Naive thymus-derived CD4-positive, alpha-beta T cell (primary cell): ENCODE measurements at regions of chr12 and their contacts with region 1.

Region 1: GRCh38 chr12:109995686-109996482 is at the start of gene GIT2:
- DNase-seq: peak; percentile 88 to 95 (median 93)
- ATAC-seq: peak; percentile 81
- H3K4me3 ChIP-seq: peak within 1 kb of the TSS; percentile 86
- H3K4me3 Mint-ChIP-seq: peak within 1 kb of the TSS; percentile 90 to 100 (median 96)
- H3K27ac ChIP-seq: peak within 1 kb of the TSS; percentile 84
- H3K27ac Mint-ChIP-seq: peak within 1 kb of the TSS; percentile 84 to 100 (median 96)
- H3K4me1 ChIP-seq: peaks cover 22 to 33% of the 10 kb centered on the region in 2 donors
- H3K4me1 Mint-ChIP-seq: peaks cover 42 to 77% (median 66%) of the 10 kb centered on the region in 7 donors
- H3K27me3 ChIP-seq: no peaks in the 10 kb centered on the region
- H3K27me3 Mint-ChIP-seq: no peaks in the 10 kb centered on the region
- total RNA-seq, gene GIT2: 70.3 to 128 (median 109) TPM

Region 2: GRCh38 chr12:109713187-109713984 is 282.5 kb before region 1 on chr12 and contains the start of gene FAM222A:
- CTCF ChIA-PET with region 1: no interaction called
- POLR2A ChIA-PET with region 1: no interaction called
- intact Hi-C with region 1: loop called (anchors 1 to 10 kb)
- DNase-seq: peak; percentile 94 to 99 (median 98)
- ATAC-seq: peak; percentile 94
- H3K4me3 ChIP-seq: peak within 1 kb of the TSS; percentile 41
- H3K4me3 Mint-ChIP-seq: peak within 1 kb of the TSS; percentile 57 to 81 (median 72)
- H3K27ac ChIP-seq: peak within 1 kb of the TSS; percentile 55
- H3K27ac Mint-ChIP-seq: peak within 1 kb of the TSS in 1 of 9 donors; percentile 48
- H3K4me1 ChIP-seq: peaks cover 3 to 11% of the 10 kb centered on the region in 2 donors
- H3K4me1 Mint-ChIP-seq: peaks cover 0 to 4% (median 0%) of the 10 kb centered on the region in 7 donors
- H3K27me3 ChIP-seq: peaks cover 0 to 6% of the 10 kb centered on the region in 2 donors
- H3K27me3 Mint-ChIP-seq: peaks cover 29 to 65% (median 30%) of the 10 kb centered on the region in 5 donors
- total RNA-seq, gene FAM222A: 0.24 to 1.6 (median 0.80) TPM

Region 3: DNA sequence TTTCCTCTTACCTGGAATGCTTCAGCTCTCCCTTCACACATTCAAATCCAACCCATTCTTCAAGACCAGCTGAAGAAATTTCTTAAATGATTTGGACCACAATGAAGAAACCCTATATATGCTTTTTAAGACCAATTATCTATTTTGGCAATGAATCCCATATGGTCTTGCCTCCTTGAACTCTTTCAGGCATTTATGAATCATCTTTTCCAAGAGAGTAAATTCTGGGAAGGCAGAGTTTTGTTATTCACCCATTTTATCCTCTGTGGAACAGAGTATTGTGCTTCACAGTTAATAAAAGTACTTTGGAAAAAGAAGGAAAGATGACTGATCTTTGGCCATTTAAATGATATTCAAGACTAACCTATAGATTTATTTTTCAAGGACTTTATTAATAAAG is 13.7 kb before region 1 on chr12:
- CTCF ChIA-PET with region 1: interaction called, 4 read pairs
- POLR2A ChIA-PET with region 1: interaction called, 6 read pairs
- intact Hi-C with region 1: loop called (anchors 1 to 2 kb)
- DNase-seq: no peak
- ATAC-seq: no peak
- H3K4me3 ChIP-seq: no peak overlapping the region
- H3K4me3 Mint-ChIP-seq: peak overlapping the region in 3 of 10 donors; percentile 12 to 54 (median 25)
- H3K27ac ChIP-seq: no peak overlapping the region
- H3K27ac Mint-ChIP-seq: peak overlapping the region in 8 of 9 donors; percentile 20 to 92 (median 74)
- H3K4me1 ChIP-seq: peaks cover 0 to 3% of the 10 kb centered on the region in 2 donors
- H3K4me1 Mint-ChIP-seq: peaks cover 20 to 48% (median 27%) of the 10 kb centered on the region in 7 donors
- H3K27me3 ChIP-seq: no peaks in the 10 kb centered on the region
- H3K27me3 Mint-ChIP-seq: no peaks in the 10 kb centered on the region

Region 4: GRCh38 chr12:110124184-110124995 is 128.5 kb after region 1 on chr12 and contains the start of gene IFT81:
- CTCF ChIA-PET with region 1: no interaction called
- POLR2A ChIA-PET with region 1: no interaction called
- intact Hi-C with region 1: loop called (anchors 1 to 2 kb)
- DNase-seq: peak; percentile 84 to 98 (median 93)
- ATAC-seq: peak; percentile 98
- H3K4me3 ChIP-seq: peak within 1 kb of the TSS; percentile 99
- H3K4me3 Mint-ChIP-seq: peak within 1 kb of the TSS; percentile 83 to 94 (median 92)
- H3K27ac ChIP-seq: peak within 1 kb of the TSS; percentile 84
- H3K27ac Mint-ChIP-seq: peak within 1 kb of the TSS; percentile 56 to 94 (median 90)
- H3K4me1 ChIP-seq: peaks cover 4 to 5% of the 10 kb centered on the region in 2 donors
- H3K4me1 Mint-ChIP-seq: peaks cover 0 to 9% (median 8%) of the 10 kb centered on the region in 7 donors
- H3K27me3 ChIP-seq: no peaks in the 10 kb centered on the region
- H3K27me3 Mint-ChIP-seq: peaks cover 0 to 52% (median 0%) of the 10 kb centered on the region in 5 donors
- total RNA-seq, gene IFT81: 0.66 to 1.3 (median 1.3) TPM

Region 5: DNA sequence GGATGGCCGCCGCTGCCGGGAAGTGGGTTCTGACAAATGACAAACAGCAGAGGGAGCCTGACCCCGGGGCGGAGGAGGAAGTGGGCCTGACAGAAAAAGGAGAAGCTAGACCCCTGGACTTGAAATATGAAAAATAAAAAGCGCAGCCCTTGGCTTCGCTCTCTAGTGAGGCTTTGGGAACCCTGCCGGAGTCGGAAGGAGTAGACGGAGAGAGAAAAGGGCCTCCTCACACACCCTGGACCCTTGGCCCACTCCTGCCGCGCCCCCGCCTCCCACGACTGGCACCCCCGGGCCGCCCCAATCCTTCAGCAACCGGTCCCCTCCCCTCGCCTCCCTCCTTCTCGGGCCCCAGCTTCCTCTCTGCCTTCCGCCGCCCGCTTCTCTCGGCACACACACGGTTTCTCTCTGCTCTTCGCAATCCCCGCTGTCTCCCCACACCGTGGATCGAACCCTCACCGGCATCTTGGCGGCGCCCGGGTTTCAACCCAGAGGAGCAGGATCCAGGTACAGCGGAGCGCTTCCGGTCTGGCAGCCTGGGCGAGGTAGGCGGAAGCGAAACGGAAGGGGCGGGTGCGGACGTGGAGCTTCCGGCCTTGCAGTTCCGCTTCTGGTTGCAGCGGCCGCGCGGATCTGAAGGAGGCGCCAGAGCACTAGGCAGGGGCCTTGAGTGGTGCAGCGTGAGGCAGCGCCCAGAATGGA is 454.1 kb after region 1 on chr12 and contains the start of gene ARPC3:
- CTCF ChIA-PET with region 1: no interaction called
- POLR2A ChIA-PET with region 1: interaction called, 3 read pairs
- intact Hi-C with region 1: loop called (anchors 1 to 5 kb)
- DNase-seq: peak; percentile 86 to 95 (median 94)
- ATAC-seq: peak; percentile 98
- H3K4me3 ChIP-seq: peak within 1 kb of the TSS; percentile 95
- H3K4me3 Mint-ChIP-seq: peak within 1 kb of the TSS; percentile 90 to 100 (median 99)
- H3K27ac ChIP-seq: peak within 1 kb of the TSS; percentile 93
- H3K27ac Mint-ChIP-seq: peak within 1 kb of the TSS; percentile 94 to 100 (median 99)
- H3K4me1 ChIP-seq: peaks cover 20 to 22% of the 10 kb centered on the region in 2 donors
- H3K4me1 Mint-ChIP-seq: peaks cover 31 to 51% (median 44%) of the 10 kb centered on the region in 7 donors
- H3K27me3 ChIP-seq: no peaks in the 10 kb centered on the region
- H3K27me3 Mint-ChIP-seq: peaks cover 0 to 3% (median 0%) of the 10 kb centered on the region in 5 donors
- total RNA-seq, gene ARPC3: 166 to 381 (median 187) TPM